Naive thymus-derived CD4-positive, alpha-beta T cell (primary cell): ENCODE measurements at regions of chr19 and their contacts with region 1.

Region 1: GRCh38 chr19:3185482-3186376 is at the start of gene NCLN:
- DNase-seq: peak; percentile 92 to 98 (median 95)
- ATAC-seq: peak; percentile 94
- H3K4me3 ChIP-seq: peak within 1 kb of the TSS; percentile 71
- H3K4me3 Mint-ChIP-seq: peak within 1 kb of the TSS; percentile 86 to 99 (median 94)
- H3K27ac ChIP-seq: peak within 1 kb of the TSS; percentile 74
- H3K27ac Mint-ChIP-seq: peak within 1 kb of the TSS; percentile 89 to 99 (median 91)
- H3K4me1 ChIP-seq: peaks cover 53 to 63% of the 10 kb centered on the region in 2 donors
- H3K4me1 Mint-ChIP-seq: peaks cover 43 to 66% (median 54%) of the 10 kb centered on the region in 7 donors
- H3K27me3 ChIP-seq: no peaks in the 10 kb centered on the region
- H3K27me3 Mint-ChIP-seq: peaks cover 0 to 2% (median 0%) of the 10 kb centered on the region in 5 donors
- total RNA-seq, gene NCLN: 45.4 to 64.7 (median 53.7) TPM

Region 2: GRCh38 chr19:2900296-2901252 is 285.2 kb before region 1 on chr19 and contains the start of gene ZNF57:
- CTCF ChIA-PET with region 1: no interaction called
- POLR2A ChIA-PET with region 1: interaction called, 4 read pairs
- intact Hi-C with region 1: loop called in 1 of 2 experiments (anchors 2 kb)
- DNase-seq: peak; percentile 83 to 98 (median 96)
- ATAC-seq: peak; percentile 99
- H3K4me3 ChIP-seq: peak within 1 kb of the TSS; percentile 79
- H3K4me3 Mint-ChIP-seq: peak within 1 kb of the TSS; percentile 88 to 99 (median 96)
- H3K27ac ChIP-seq: peak within 1 kb of the TSS; percentile 63
- H3K27ac Mint-ChIP-seq: peak within 1 kb of the TSS; percentile 55 to 91 (median 85)
- H3K4me1 ChIP-seq: peaks cover 0 to 4% of the 10 kb centered on the region in 2 donors
- H3K4me1 Mint-ChIP-seq: peaks cover 11 to 28% (median 21%) of the 10 kb centered on the region in 7 donors
- H3K27me3 ChIP-seq: no peaks in the 10 kb centered on the region
- H3K27me3 Mint-ChIP-seq: no peaks in the 10 kb centered on the region
- total RNA-seq, gene ZNF57: 1.7 to 5.0 (median 2.2) TPM

Region 3: GRCh38 chr19:3163230-3163886 is 22.4 kb before region 1 on chr19:
- CTCF ChIA-PET with region 1: interaction called, 5 read pairs
- POLR2A ChIA-PET with region 1: interaction called, 13 read pairs
- intact Hi-C with region 1: no loop called
- DNase-seq: peak in 8 of 9 donors; percentile 48 to 76 (median 62)
- ATAC-seq: peak; percentile 76
- H3K4me3 ChIP-seq: no peak overlapping the region
- H3K4me3 Mint-ChIP-seq: peak overlapping the region in 2 of 10 donors; percentile 35 to 38
- H3K27ac ChIP-seq: no peak overlapping the region
- H3K27ac Mint-ChIP-seq: peak overlapping the region in 6 of 9 donors; percentile 14 to 83 (median 56)
- H3K4me1 ChIP-seq: no peaks in the 10 kb centered on the region
- H3K4me1 Mint-ChIP-seq: peaks cover 12 to 48% (median 15%) of the 10 kb centered on the region in 7 donors
- H3K27me3 ChIP-seq: no peaks in the 10 kb centered on the region
- H3K27me3 Mint-ChIP-seq: no peaks in the 10 kb centered on the region

Region 4: GRCh38 chr19:3434712-3435553 is 249.2 kb after region 1 on chr19:
- CTCF ChIA-PET with region 1: no interaction called
- POLR2A ChIA-PET with region 1: no interaction called
- intact Hi-C with region 1: loop called (anchors 1 kb)
- DNase-seq: peak; percentile 91 to 97 (median 96)
- ATAC-seq: peak; percentile 99
- H3K4me3 ChIP-seq: peak overlapping the region; percentile 70
- H3K4me3 Mint-ChIP-seq: peak overlapping the region; percentile 87 to 100 (median 96)
- H3K27ac ChIP-seq: peak overlapping the region; percentile 86
- H3K27ac Mint-ChIP-seq: peak overlapping the region; percentile 95 to 99 (median 98)
- H3K4me1 ChIP-seq: peaks cover 9 to 11% of the 10 kb centered on the region in 2 donors
- H3K4me1 Mint-ChIP-seq: peaks cover 7 to 18% (median 14%) of the 10 kb centered on the region in 7 donors
- H3K27me3 ChIP-seq: no peaks in the 10 kb centered on the region
- H3K27me3 Mint-ChIP-seq: no peaks in the 10 kb centered on the region